B cell (primary cell): ENCODE measurements at regions of chr17 and their contacts with region 1.

Region 1: DNA sequence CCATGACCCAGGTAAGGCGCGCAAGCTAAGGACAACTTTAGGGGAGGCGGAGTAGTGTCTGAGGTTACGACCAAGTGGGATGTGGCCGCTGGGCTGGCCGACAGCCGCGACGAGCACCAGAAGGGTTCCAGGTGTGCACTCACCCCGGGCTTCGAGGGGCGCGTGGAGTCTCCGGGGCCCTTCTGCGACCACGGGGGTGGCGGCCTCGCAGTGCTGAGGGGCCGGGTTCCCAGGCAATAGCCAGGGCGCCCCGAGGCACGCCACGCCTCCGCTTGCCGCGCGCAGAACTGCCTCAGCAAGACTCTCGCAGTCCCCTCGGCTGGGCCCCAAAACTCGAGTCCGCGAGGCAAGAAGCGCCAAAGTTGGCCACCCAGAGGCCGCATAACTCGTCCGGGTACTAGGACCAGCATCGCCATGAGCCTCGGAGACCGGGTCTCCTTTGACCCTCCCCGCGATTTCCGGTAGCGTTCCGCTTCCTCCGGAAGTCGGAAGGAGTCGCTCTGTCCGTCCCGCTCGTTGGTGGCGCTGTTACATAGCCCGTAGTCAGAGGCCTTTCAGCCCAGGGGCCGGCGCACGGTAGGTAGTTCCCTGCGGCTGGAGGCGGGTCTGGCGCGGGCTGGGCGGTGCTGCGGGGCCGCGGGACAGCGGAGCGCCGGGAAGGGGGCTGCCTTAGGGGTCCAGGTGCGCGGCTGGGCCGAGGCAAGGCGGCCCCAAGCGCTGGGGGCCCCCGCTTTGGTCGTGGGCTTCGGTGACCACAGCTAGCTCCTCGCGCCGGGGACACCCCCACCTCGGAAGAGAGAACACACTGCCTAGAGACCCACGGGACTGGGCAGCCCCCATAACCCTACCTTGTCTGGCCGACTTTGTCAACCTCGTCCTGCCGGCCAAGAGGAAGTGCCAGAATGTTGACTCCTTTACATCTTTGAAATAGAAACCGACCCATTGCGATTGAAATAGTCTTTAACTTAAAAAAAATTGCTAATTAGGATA is at the starts of genes ADPRM and SCO1:
- DNase-seq: peak; percentile 93
- ATAC-seq: peak; percentile 96
- H3K4me3 ChIP-seq: peak within 1 kb of the TSS; percentile 78 to 91 (median 84)
- H3K4me3 Mint-ChIP-seq: peak within 1 kb of the TSS; percentile 93
- H3K27ac ChIP-seq: peak within 1 kb of the TSS; percentile 81 to 93
- H3K27ac Mint-ChIP-seq: peak within 1 kb of the TSS; percentile 96
- H3K4me1 ChIP-seq: peaks cover 28 to 46% of the 10 kb centered on the region in 2 donors
- H3K4me1 Mint-ChIP-seq: peaks cover 47% of the 10 kb centered on the region
- H3K27me3 ChIP-seq: no peaks in the 10 kb centered on the region
- H3K27me3 Mint-ChIP-seq: no peaks in the 10 kb centered on the region
- CTCF ChIP-seq: peak; percentile 31
- total RNA-seq, gene ADPRM: 29.1 and 32.4 TPM in 2 replicates
- total RNA-seq, gene SCO1: 28.6 and 33.1 TPM in 2 replicates

Region 2: DNA sequence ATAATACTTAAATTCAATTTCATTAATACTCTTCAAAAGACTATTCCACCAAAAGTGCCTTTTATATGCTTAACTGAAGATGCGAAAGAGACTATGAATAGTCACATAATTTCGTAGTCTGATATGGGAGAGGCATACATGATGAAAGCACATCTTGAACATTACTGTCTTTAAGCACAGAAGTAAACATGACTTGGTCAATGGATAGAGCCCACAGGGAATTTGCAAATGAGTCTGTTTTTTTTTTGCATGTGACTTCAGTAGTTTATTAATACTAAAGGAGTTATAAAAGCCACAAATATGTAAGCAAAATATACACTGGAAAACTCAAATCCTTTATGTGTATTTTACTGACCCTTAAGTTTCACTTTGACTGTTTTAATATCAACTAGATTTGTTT is 15.9 kb after region 1 on chr17:
- CTCF ChIA-PET with region 1: no interaction called
- POLR2A ChIA-PET with region 1: no interaction called
- intact Hi-C with region 1: no loop called
- DNase-seq: no peak
- ATAC-seq: no peak
- H3K4me3 ChIP-seq: no peak overlapping the region
- H3K4me3 Mint-ChIP-seq: no peak overlapping the region
- H3K27ac ChIP-seq: no peak overlapping the region
- H3K27ac Mint-ChIP-seq: no peak overlapping the region
- H3K4me1 ChIP-seq: no peaks in the 10 kb centered on the region
- H3K4me1 Mint-ChIP-seq: peaks cover 3% of the 10 kb centered on the region
- H3K27me3 ChIP-seq: no peaks in the 10 kb centered on the region
- H3K27me3 Mint-ChIP-seq: no peaks in the 10 kb centered on the region
- CTCF ChIP-seq: no peak

Region 3: DNA sequence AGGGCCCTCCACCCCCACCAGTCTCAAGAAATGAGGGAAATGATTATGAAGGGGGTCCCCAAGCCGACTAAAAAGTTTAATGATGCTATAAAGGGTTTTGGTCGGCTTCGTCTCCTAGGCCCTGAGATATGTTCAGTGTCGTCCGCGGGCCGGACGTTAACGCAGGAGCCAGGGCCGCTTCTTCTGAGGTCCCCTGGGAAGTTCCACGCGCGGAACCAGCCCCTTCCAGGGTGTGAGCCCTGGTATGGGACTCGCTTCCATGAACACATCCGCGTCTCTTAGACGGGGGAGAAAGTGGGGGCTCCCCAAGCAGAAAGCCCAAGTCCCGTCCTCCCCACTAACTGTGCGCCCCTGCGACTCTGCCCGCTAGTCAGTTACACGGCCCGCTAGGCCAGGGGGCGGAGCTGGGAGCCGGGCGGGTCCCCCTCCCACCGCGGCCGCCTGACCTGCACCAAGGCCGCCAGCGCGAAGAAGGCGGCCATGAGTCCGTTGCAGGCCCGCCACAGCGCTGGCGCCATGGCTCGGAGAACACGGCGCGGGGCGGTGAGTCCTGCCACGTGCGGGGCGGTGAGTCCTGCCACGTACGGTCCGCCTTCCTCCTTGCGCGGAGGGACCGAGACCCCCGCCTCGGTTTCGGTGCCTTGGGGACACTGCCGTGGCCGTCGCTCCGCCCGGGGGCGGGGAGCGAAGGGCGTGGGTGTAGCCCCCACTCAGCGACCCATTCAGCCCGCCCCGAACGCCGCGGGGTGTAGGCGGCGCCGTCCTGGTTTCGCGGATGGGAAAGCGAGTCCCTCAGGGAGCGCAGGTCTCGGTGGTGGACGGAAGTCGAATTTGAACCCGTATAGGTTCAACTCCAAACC is 32.2 kb after region 1 on chr17 and contains the start of gene TMEM220:
- CTCF ChIA-PET with region 1: interaction called, 5 read pairs
- POLR2A ChIA-PET with region 1: interaction called, 4 read pairs
- intact Hi-C with region 1: loop called (anchors 1 kb)
- DNase-seq: peak; percentile 67
- ATAC-seq: peak; percentile 87
- H3K4me3 ChIP-seq: peak within 1 kb of the TSS; percentile 47 to 84 (median 69)
- H3K4me3 Mint-ChIP-seq: peak within 1 kb of the TSS; percentile 90
- H3K27ac ChIP-seq: peak within 1 kb of the TSS; percentile 34 to 75
- H3K27ac Mint-ChIP-seq: peak within 1 kb of the TSS; percentile 85
- H3K4me1 ChIP-seq: peaks cover 0 to 9% of the 10 kb centered on the region in 2 donors
- H3K4me1 Mint-ChIP-seq: peaks cover 15% of the 10 kb centered on the region
- H3K27me3 ChIP-seq: no peaks in the 10 kb centered on the region
- H3K27me3 Mint-ChIP-seq: peaks cover 9% of the 10 kb centered on the region
- CTCF ChIP-seq: no peak
- total RNA-seq, gene TMEM220: 4.9 and 7.4 TPM in 2 replicates